Activated CD4-positive, alpha-beta memory T cell treated with anti-CD3 and anti-CD28 coated beads, Interleukin-2, amount 10 ng/mL, durations not matched to agents 7 days and 5 days (primary cell): ENCODE measurements at regions of chr12 and their contacts with region 1.

Region 1: DNA sequence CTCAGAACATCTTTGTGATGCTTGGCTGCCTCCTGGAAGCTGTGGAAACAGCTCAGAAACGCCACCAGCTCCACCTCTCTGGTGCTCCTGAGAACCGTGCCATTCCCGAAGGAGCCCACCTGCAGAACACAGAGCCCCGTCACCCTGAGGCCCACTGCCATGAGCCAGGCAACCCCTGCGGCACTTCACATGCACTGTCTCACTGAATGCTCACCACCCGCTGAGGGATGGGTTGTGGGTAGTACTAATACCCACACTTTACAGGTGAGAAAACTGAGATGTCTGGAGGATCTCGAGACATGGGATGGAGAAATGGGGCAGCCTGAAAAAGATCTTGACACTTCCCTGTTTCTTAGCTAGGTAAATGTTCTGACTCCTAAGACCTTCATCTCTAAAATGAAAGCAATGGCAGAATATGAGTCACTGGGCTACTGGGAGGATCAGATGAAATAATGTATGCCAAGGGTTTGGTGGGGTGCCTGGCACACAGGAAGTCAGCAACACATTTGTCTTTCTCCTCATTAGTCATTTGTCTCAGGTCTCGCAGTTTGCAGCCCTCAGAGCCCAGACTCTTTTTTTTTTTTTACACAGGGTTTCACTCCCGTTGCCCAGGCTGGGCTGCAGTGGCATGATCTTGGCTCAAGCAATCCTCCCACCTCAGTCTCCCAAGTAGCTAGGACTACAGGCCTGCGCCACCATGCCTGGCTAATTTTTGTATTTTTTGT is 5.3 kb downstream of the OASL start:
- DNase-seq: peak; percentile 75
- H3K4me3 Mint-ChIP-seq: peak overlapping the region; percentile 99
- H3K27ac Mint-ChIP-seq: peak overlapping the region; percentile 90
- H3K4me1 Mint-ChIP-seq: peaks cover 59% of the 10 kb centered on the region
- H3K27me3 Mint-ChIP-seq: no peaks in the 10 kb centered on the region

Region 2: GRCh38 chr12:120783197-120783596 is 250.6 kb before region 1 on chr12:
- CTCF ChIA-PET with region 1: no interaction called
- POLR2A ChIA-PET with region 1: no interaction called
- DNase-seq: no peak
- H3K4me3 Mint-ChIP-seq: peak overlapping the region; percentile 6
- H3K27ac Mint-ChIP-seq: peak overlapping the region; percentile 70
- H3K4me1 Mint-ChIP-seq: peaks cover 28% of the 10 kb centered on the region
- H3K27me3 Mint-ChIP-seq: no peaks in the 10 kb centered on the region

Region 3: GRCh38 chr12:120879102-120879501 is 154.7 kb before region 1 on chr12:
- CTCF ChIA-PET with region 1: no interaction called
- POLR2A ChIA-PET with region 1: no interaction called
- DNase-seq: no peak
- H3K4me3 Mint-ChIP-seq: no peak overlapping the region
- H3K27ac Mint-ChIP-seq: no peak overlapping the region
- H3K4me1 Mint-ChIP-seq: peaks cover 13% of the 10 kb centered on the region
- H3K27me3 Mint-ChIP-seq: no peaks in the 10 kb centered on the region

Region 4: GRCh38 chr12:121015825-121016766 is 17.7 kb before region 1 on chr12 and contains the start of gene C12orf43:
- CTCF ChIA-PET with region 1: interaction called, 8 read pairs
- POLR2A ChIA-PET with region 1: interaction called, 25 read pairs
- DNase-seq: peak; percentile 94
- H3K4me3 Mint-ChIP-seq: peak within 1 kb of the TSS; percentile 90
- H3K27ac Mint-ChIP-seq: peak within 1 kb of the TSS; percentile 71
- H3K4me1 Mint-ChIP-seq: peaks cover 23% of the 10 kb centered on the region
- H3K27me3 Mint-ChIP-seq: no peaks in the 10 kb centered on the region
- total RNA-seq, gene C12orf43: 11.5 to 12.3 TPM